ENCODE measurements at regions of chr19 and their contacts with region 1.

Region 1: DNA sequence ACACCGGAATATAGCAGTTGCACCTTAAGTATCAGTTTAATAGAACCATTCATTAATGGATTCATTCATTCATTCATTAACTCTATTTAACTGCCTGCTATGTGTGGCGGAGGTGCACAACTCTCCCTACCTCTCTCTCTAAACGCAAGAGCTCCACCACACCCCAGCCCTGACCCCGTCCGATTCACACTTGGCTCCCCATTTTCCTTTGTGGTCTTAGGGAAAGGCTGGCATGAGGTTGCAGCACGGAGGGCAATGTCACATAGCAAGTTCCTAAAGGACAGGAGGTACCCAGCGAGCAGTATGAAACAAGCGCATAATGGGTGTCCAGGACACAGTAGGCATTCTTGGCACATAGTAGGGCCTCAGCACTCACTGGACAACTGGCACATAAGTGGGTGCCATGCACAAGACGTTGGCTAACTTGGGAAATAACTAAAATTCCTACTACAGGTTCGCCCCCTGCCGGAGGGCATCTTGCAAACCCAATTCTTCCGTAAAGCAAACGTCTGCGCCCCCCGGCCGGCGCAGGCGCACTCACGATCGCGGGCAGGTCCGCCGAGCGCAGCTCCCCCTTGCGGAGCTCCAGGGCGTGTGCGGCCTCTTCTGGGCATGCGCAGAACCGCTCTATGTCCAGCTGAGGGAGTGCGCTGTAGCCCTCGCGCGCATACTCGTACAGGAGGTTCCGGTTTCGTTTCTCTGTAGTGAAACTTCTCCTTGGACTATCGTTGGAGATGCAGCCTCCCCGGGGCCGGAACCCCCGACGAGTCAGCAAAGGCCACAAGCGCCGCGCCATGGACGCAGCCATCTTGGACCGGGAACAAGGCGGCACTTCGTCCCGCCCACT is at the start of gene SARS2:
- DNase-seq: peak in 1 of 2 donors; percentile 97
- ATAC-seq: peak; percentile 67 to 87 (median 68)
- H3K4me3 ChIP-seq: peak within 1 kb of the TSS; percentile 71
- H3K4me3 Mint-ChIP-seq: peak within 1 kb of the TSS; percentile 96
- H3K27ac ChIP-seq: peak within 1 kb of the TSS; percentile 84
- H3K27ac Mint-ChIP-seq: peak within 1 kb of the TSS; percentile 91 to 99
- H3K4me1 ChIP-seq: peaks cover 63% of the 10 kb centered on the region
- H3K4me1 Mint-ChIP-seq: peaks cover 52 to 70% of the 10 kb centered on the region in 2 donors
- H3K27me3 ChIP-seq: no peaks in the 10 kb centered on the region
- H3K27me3 Mint-ChIP-seq: no peaks in the 10 kb centered on the region
- CTCF ChIP-seq: peak; percentile 100
- total RNA-seq, gene SARS2: 25.4 to 53.0 (median 38.9) TPM

Region 2: GRCh38 chr19:38402967-38403861 is 526.9 kb before region 1 on chr19 and contains the start of gene FAM98C:
- intact Hi-C with region 1: loop called (anchors 2 kb)
- DNase-seq: peak; percentile 99
- ATAC-seq: peak; percentile 95 to 99 (median 96)
- H3K4me3 ChIP-seq: peak within 1 kb of the TSS; percentile 93
- H3K4me3 Mint-ChIP-seq: peak within 1 kb of the TSS; percentile 97
- H3K27ac ChIP-seq: peak within 1 kb of the TSS; percentile 84
- H3K27ac Mint-ChIP-seq: peak within 1 kb of the TSS; percentile 86 to 95
- H3K4me1 ChIP-seq: peaks cover 16% of the 10 kb centered on the region
- H3K4me1 Mint-ChIP-seq: peaks cover 10 to 19% of the 10 kb centered on the region in 2 donors
- H3K27me3 ChIP-seq: peaks cover 3% of the 10 kb centered on the region
- H3K27me3 Mint-ChIP-seq: peaks cover 12 to 16% of the 10 kb centered on the region in 2 donors
- CTCF ChIP-seq: peak; percentile 100
- total RNA-seq, gene FAM98C: 36.9 to 42.1 (median 41.6) TPM

Region 3: GRCh38 chr19:38676023-38676877 is 253.9 kb before region 1 on chr19:
- intact Hi-C with region 1: loop called (anchors 5 kb)
- DNase-seq: no peak
- ATAC-seq: no peak
- H3K4me3 ChIP-seq: no peak overlapping the region
- H3K4me3 Mint-ChIP-seq: peak overlapping the region; percentile 77
- H3K27ac ChIP-seq: peak overlapping the region; percentile 67
- H3K27ac Mint-ChIP-seq: peak overlapping the region; percentile 98 to 100
- H3K4me1 ChIP-seq: peaks cover 88% of the 10 kb centered on the region
- H3K4me1 Mint-ChIP-seq: peaks cover 81 to 88% of the 10 kb centered on the region in 2 donors
- H3K27me3 ChIP-seq: no peaks in the 10 kb centered on the region
- H3K27me3 Mint-ChIP-seq: no peaks in the 10 kb centered on the region
- CTCF ChIP-seq: no peak

Region 4: GRCh38 chr19:38769635-38770211 is 160.4 kb before region 1 on chr19:
- intact Hi-C with region 1: loop called (anchors 10 kb)
- DNase-seq: peak; percentile 88 to 93
- ATAC-seq: peak; percentile 90 to 96 (median 91)
- H3K4me3 ChIP-seq: peak overlapping the region; percentile 35
- H3K4me3 Mint-ChIP-seq: peak overlapping the region; percentile 73
- H3K27ac ChIP-seq: peak overlapping the region; percentile 67
- H3K27ac Mint-ChIP-seq: peak overlapping the region; percentile 85 to 88
- H3K4me1 ChIP-seq: peaks cover 12% of the 10 kb centered on the region
- H3K4me1 Mint-ChIP-seq: peaks cover 7% of the 10 kb centered on the region in 2 donors
- H3K27me3 ChIP-seq: no peaks in the 10 kb centered on the region
- H3K27me3 Mint-ChIP-seq: no peaks in the 10 kb centered on the region
- CTCF ChIP-seq: peak; percentile 76

Region 5: DNA sequence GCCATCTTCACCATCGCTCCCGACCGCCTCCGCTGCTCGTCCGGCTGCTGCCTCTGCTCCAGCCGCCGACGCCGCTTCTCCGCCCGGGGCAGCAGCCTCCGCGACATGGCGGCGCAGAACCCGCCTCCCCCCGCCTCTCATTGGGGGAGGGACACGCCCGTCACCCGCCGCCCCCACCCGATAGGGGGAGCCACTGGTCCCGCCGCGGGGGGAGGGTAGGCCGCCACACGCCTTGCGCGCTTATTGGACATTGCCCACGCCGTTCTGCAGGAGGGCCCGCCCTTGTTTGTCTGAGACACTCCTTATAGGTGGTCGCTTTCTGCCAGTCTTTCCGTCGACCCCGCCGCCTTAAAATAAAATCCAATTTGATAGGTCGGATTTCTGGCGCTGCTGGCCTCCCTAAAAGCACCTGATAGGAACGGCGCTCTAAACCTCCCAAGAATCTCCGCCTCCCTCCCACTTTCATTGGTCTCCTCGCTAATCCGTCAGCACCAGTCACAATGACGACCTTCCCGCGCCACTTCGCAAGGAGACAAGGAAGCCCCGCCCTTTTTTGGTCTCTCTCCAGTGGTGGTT is 80.2 kb before region 1 on chr19 and contains the start of gene HNRNPL:
- intact Hi-C with region 1: loop called (anchors 1 kb)
- DNase-seq: peak in 1 of 2 donors; percentile 98
- ATAC-seq: peak; percentile 58 to 85 (median 69)
- H3K4me3 ChIP-seq: peak within 1 kb of the TSS; percentile 84
- H3K4me3 Mint-ChIP-seq: peak within 1 kb of the TSS; percentile 96
- H3K27ac ChIP-seq: peak within 1 kb of the TSS; percentile 97
- H3K27ac Mint-ChIP-seq: peak within 1 kb of the TSS; percentile 99 to 100
- H3K4me1 ChIP-seq: peaks cover 61% of the 10 kb centered on the region
- H3K4me1 Mint-ChIP-seq: peaks cover 59 to 69% of the 10 kb centered on the region in 2 donors
- H3K27me3 ChIP-seq: no peaks in the 10 kb centered on the region
- H3K27me3 Mint-ChIP-seq: no peaks in the 10 kb centered on the region
- CTCF ChIP-seq: peak; percentile 26
- total RNA-seq, gene HNRNPL: 636 to 800 (median 702) TPM

Region 6: DNA sequence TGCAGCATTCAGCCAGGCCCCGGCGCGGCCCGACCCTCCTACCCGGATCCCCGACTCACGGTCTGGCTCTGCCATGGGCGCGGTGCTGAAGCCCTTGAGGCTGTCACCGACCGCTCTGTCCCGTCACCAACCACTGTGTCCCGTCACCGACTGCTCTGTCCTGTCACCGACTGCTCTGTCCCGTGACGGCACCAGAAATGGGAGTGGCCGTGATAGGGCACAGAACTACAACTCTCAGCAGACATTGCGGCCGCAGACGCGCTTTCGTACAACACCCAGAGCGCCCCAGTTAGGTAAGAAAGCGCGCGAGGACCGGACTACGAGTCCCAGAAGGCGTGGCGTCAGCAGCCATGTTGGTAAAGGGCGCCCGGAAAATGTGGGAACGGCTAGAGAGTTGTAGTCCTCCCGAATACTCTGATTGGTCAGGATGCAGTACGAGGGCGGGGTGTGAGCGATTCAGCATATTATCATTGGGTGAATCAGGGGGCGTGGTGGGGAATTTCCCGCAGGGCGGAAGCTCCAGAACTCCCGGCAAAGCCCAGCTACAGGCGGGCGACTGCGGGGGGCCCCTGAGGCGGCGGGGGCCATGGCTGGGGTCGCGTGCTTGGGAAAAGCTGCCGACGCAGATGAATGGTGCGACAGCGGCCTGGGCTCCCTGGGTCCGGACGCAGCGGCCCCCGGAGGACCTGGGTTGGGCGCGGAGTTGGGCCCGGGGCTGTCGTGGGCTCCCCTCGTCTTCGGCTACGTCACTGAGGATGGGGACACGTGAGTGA is 30.5 kb before region 1 on chr19 and contains the starts of genes NFKBIB and SIRT2:
- intact Hi-C with region 1: loop called (anchors 1 kb)
- DNase-seq: peak; percentile 97 to 100
- ATAC-seq: peak; percentile 82 to 95 (median 82)
- H3K4me3 ChIP-seq: peak within 1 kb of the TSS; percentile 82
- H3K4me3 Mint-ChIP-seq: peak within 1 kb of the TSS; percentile 97
- H3K27ac ChIP-seq: peak within 1 kb of the TSS; percentile 95
- H3K27ac Mint-ChIP-seq: peak within 1 kb of the TSS; percentile 96 to 98
- H3K4me1 ChIP-seq: peaks cover 35% of the 10 kb centered on the region
- H3K4me1 Mint-ChIP-seq: peaks cover 64 to 65% of the 10 kb centered on the region in 2 donors
- H3K27me3 ChIP-seq: no peaks in the 10 kb centered on the region
- H3K27me3 Mint-ChIP-seq: no peaks in the 10 kb centered on the region
- CTCF ChIP-seq: no peak
- total RNA-seq, gene NFKBIB: 78.0 to 125 (median 118) TPM
- total RNA-seq, gene SIRT2: 171 to 283 (median 208) TPM